ENCODE measurements at regions of chr17 and their contacts with region 1.

Region 1: GRCh38 chr17:72120642-72121163 is at the start of gene SOX9:
- DNase-seq: peak; percentile 98
- ATAC-seq: peak; percentile 90
- H3K4me3 ChIP-seq: peak within 1 kb of the TSS; percentile 86 to 100 (median 99)
- H3K27ac ChIP-seq: peak within 1 kb of the TSS; percentile 79
- H3K4me1 ChIP-seq: peaks cover 45% of the 10 kb centered on the region
- H3K27me3 ChIP-seq: no peaks in the 10 kb centered on the region; a peak in 1 of 5 replicates
- CTCF ChIP-seq: no peak
- EP300 ChIP-seq: no peak
- POLR2A ChIP-seq: peak; percentile 96 to 99
- RAD21 ChIP-seq: no peak; the same call in none of the 2 replicates
- total RNA-seq, gene SOX9: 27.6 and 40.1 TPM in 2 replicates

Region 2: GRCh38 chr17:70636517-70637133 is 1484.1 kb before region 1 on chr17:
- CTCF ChIA-PET with region 1: no interaction called
- POLR2A ChIA-PET with region 1: no interaction called
- in situ Hi-C with region 1: loop called (anchors 10 kb)
- intact Hi-C with region 1: loop called (anchors 5 kb)
- DNase-seq: peak; percentile 29
- ATAC-seq: no peak
- H3K4me3 ChIP-seq: no peak overlapping the region
- H3K27ac ChIP-seq: no peak overlapping the region
- H3K4me1 ChIP-seq: peaks cover 8% of the 10 kb centered on the region; the same call in 1 of the 2 replicates
- H3K27me3 ChIP-seq: no peaks in the 10 kb centered on the region
- CTCF ChIP-seq: peak; percentile 70
- EP300 ChIP-seq: no peak
- POLR2A ChIP-seq: no peak
- RAD21 ChIP-seq: peak; percentile 45; the same call in 1 of the 2 replicates

Region 3: GRCh38 chr17:71764505-71764904 is 356.2 kb before region 1 on chr17:
- CTCF ChIA-PET with region 1: no interaction called
- POLR2A ChIA-PET with region 1: interaction called, 3 read pairs
- in situ Hi-C with region 1: no loop called
- intact Hi-C with region 1: loop called (anchors 5 kb)
- DNase-seq: peak; percentile 25
- ATAC-seq: peak; percentile 97
- H3K4me3 ChIP-seq: no peak overlapping the region
- H3K27ac ChIP-seq: no peak overlapping the region
- H3K4me1 ChIP-seq: no peaks in the 10 kb centered on the region
- H3K27me3 ChIP-seq: no peaks in the 10 kb centered on the region
- CTCF ChIP-seq: peak; percentile 53
- EP300 ChIP-seq: no peak
- POLR2A ChIP-seq: no peak
- RAD21 ChIP-seq: 0 out of 2 replicates have a peak, but pooled peaks have one; percentile 27

Region 4: DNA sequence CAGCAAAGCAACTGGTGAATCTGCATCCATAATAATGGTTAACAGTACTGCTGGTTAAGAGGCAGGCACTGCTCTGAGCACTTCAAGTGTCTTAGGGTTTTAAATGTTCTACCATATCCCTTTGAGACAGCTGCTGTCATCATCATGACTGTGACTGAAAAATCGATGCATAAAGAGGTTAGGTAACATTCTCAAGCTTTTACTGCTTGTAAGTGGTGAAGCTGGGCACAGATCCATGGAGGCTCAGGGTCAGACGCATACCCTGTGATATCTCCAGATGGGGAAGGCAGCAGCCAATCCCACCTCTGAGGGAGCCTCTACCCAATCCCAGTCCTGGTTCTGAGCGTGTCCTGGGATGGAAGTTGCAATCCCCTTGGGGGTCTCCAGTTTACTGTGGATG is 57.4 kb before region 1 on chr17:
- CTCF ChIA-PET with region 1: no interaction called
- POLR2A ChIA-PET with region 1: no interaction called
- in situ Hi-C with region 1: no loop called
- intact Hi-C with region 1: no loop called
- DNase-seq: no peak
- ATAC-seq: no peak
- H3K4me3 ChIP-seq: no peak overlapping the region
- H3K27ac ChIP-seq: no peak overlapping the region
- H3K4me1 ChIP-seq: peaks cover 6% of the 10 kb centered on the region
- H3K27me3 ChIP-seq: no peaks in the 10 kb centered on the region; a peak in 1 of 5 replicates
- CTCF ChIP-seq: no peak
- EP300 ChIP-seq: no peak
- POLR2A ChIP-seq: no peak
- RAD21 ChIP-seq: no peak

Region 5: GRCh38 chr17:72143245-72143644 is 22.5 kb after region 1 on chr17:
- CTCF ChIA-PET with region 1: no interaction called
- POLR2A ChIA-PET with region 1: interaction called, 12 read pairs
- in situ Hi-C with region 1: no loop called
- intact Hi-C with region 1: no loop called
- DNase-seq: peak; percentile 41
- ATAC-seq: peak; percentile 82
- H3K4me3 ChIP-seq: no peak overlapping the region
- H3K27ac ChIP-seq: no peak overlapping the region
- H3K4me1 ChIP-seq: peaks cover 16% of the 10 kb centered on the region
- H3K27me3 ChIP-seq: peaks cover 2 to 23% of the 10 kb centered on the region in 2 experiments; a peak in 2 of 5 replicates
- CTCF ChIP-seq: no peak
- EP300 ChIP-seq: peak in 1 of 2 experiments; percentile 53; a peak in 1 of 4 replicates
- POLR2A ChIP-seq: no peak
- RAD21 ChIP-seq: no peak

Region 6: DNA sequence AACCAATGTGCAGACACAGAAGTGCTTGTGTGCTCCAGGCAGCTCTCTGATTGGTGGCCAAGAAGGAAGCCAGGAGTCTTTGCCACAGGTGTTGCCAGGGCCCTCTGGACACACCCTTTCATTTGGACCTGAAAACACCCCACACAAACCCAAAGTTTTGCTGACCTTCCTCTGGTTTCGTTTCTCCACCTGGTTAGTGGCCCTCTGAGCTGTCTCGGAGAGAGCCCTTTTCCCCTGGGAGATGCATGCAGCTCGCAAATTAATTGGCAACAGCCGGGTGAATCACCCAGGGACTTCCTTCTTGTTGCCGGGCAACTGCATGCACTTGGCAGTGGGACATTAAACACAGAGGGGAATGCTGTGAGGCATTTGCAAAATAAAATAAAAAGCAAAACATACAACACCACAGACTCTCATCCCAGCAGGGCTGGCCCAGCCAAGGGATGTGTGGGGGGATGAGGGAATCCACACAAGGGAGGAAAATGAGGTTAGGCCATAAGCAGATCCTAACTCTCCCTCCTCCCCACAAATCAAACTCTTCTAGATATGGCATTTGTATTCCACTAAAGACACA is 286.7 kb after region 1 on chr17:
- CTCF ChIA-PET with region 1: no interaction called
- POLR2A ChIA-PET with region 1: interaction called, 71 read pairs
- in situ Hi-C with region 1: loop called (anchors 5 kb)
- intact Hi-C with region 1: no loop called
- DNase-seq: no peak
- ATAC-seq: no peak
- H3K4me3 ChIP-seq: no peak overlapping the region
- H3K27ac ChIP-seq: peak overlapping the region; percentile 29
- H3K4me1 ChIP-seq: peaks cover 100% of the 10 kb centered on the region
- H3K27me3 ChIP-seq: no peaks in the 10 kb centered on the region
- CTCF ChIP-seq: no peak
- EP300 ChIP-seq: no peak
- POLR2A ChIP-seq: no peak
- RAD21 ChIP-seq: no peak

Region 7: DNA sequence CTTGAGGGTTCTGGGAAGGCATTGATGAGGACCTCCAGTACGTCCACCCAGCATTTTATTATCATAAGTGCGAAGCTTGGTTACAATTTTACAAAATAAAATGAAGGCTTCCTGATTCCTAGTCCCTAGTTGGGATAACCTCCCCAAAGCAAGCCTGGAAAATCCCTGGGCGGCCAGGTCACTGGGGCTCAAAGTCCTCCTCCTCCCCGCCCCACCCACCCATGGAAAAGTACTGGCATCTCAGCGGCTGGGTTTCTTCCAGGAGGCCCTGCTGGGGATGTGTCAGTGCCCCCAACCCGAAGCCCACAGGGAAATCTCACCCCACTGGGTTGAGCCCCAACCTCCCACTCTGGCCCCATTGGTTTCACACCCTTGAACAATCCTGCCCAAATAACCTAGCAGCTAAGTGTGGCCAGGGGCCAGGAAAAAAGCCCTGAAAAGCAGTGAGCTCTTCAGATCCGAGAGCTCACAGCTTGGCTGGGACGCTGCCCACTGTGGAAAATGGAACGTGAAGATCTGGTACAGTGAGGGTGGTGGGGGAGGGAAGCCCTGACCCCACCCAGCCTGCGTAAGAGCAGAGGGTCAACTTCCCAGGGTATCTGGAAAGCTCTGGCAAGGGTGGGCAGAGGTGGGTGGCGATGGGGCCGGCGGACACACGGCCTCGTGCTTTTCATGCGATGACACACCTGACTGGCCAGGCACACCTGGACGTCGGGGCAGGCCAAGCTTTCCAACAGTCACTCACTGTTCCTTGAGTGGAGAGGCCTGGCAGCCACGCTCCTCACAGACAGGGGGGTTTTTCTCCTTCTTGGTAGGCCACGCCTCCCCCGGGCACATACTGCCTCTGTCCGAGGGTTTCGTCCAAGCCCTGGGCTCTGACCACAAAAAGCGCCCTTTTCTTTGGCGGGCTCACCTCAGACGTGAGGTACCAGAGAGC is 324.6 kb after region 1 on chr17:
- CTCF ChIA-PET with region 1: no interaction called
- POLR2A ChIA-PET with region 1: interaction called, 28 read pairs
- in situ Hi-C with region 1: no loop called
- intact Hi-C with region 1: no loop called
- DNase-seq: peak; percentile 84
- ATAC-seq: peak; percentile 55
- H3K4me3 ChIP-seq: peak overlapping the region in 1 of 3 experiments; percentile 48; a peak in 2 of 6 replicates
- H3K27ac ChIP-seq: peak overlapping the region; percentile 96
- H3K4me1 ChIP-seq: peaks cover 97% of the 10 kb centered on the region
- H3K27me3 ChIP-seq: no peaks in the 10 kb centered on the region
- CTCF ChIP-seq: no peak; the same call in 1 of the 2 replicates
- EP300 ChIP-seq: peak in 1 of 2 experiments; percentile 92; a peak in 2 of 4 replicates
- POLR2A ChIP-seq: peak in 1 of 2 experiments; percentile 16; a peak in 1 of 4 replicates
- RAD21 ChIP-seq: no peak

Region 8: DNA sequence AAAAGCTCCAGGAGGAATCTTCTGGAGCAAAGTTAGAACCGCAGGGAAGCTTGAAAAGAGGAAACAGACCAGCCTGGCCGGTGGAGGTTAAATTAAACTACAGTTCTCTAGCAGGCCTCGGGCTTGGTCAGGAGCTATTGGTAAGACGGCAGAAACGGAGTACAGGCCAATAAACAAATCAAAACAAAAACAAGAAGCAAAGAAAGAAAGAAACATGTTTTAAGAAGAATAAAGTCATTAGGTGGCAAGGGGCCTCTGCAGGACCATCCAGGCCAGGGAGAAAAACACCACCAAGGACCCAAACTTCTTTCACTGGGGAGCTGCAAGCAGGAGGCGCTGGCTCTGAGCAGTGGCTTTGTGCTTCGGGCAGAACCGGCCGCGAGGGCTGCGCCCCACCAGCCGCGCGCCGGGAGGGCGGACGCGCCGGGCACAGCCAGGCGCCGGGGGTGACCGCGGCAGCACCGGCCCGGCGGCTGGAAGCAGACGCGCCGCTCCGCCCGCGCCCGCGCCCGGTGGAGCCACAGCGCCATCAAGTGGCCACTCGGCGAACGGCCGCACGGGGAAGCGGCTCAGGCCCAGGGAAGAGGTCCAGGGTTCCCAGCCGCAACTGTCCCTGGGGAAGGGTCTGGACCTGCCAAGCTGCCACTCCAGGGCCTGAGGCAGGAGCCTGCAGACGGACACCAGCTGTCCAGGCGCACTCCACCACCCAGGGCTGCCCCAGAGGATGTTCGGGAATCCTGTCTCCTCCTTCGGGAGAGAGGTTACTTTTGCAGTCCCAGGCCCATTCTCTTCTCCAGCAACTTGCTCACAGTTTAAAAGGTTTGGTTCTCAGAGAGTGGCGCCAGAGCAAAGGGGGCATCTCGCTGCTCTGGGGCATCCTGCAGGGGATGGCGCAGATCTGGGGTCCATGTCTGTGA is 419.5 kb after region 1 on chr17:
- CTCF ChIA-PET with region 1: interaction called, 4 read pairs
- POLR2A ChIA-PET with region 1: interaction called, 72 read pairs
- in situ Hi-C with region 1: no loop called
- intact Hi-C with region 1: no loop called
- DNase-seq: peak; percentile 66
- ATAC-seq: peak; percentile 99
- H3K4me3 ChIP-seq: peak overlapping the region in 1 of 3 experiments; percentile 45; a peak in 3 of 6 replicates
- H3K27ac ChIP-seq: peak overlapping the region; percentile 30
- H3K4me1 ChIP-seq: peaks cover 80% of the 10 kb centered on the region
- H3K27me3 ChIP-seq: no peaks in the 10 kb centered on the region
- CTCF ChIP-seq: peak; percentile 93
- EP300 ChIP-seq: peak in 1 of 2 experiments; percentile 58; a peak in 2 of 4 replicates
- POLR2A ChIP-seq: no peak
- RAD21 ChIP-seq: peak; percentile 100

Measured in HepG2 (cell line).